ENCODE measurements at regions of chr1 and their contacts with region 1.

Region 1: GRCh38 chr1:157992031-157992832 is 1.2 kb upstream of the KIRREL1 start:
- DNase-seq: peak; percentile 56 to 75 (median 64)
- H3K4me3 ChIP-seq: peak overlapping the region in 3 of 7 experiments; percentile 69 to 81 (median 73)
- H3K27ac ChIP-seq: no peak overlapping the region
- H3K4me1 ChIP-seq: peaks cover 0 to 20% (median 16%) of the 10 kb centered on the region in 4 experiments
- H3K27me3 ChIP-seq: peaks cover 0 to 12% (median 2%) of the 10 kb centered on the region in 5 experiments

Region 2: DNA sequence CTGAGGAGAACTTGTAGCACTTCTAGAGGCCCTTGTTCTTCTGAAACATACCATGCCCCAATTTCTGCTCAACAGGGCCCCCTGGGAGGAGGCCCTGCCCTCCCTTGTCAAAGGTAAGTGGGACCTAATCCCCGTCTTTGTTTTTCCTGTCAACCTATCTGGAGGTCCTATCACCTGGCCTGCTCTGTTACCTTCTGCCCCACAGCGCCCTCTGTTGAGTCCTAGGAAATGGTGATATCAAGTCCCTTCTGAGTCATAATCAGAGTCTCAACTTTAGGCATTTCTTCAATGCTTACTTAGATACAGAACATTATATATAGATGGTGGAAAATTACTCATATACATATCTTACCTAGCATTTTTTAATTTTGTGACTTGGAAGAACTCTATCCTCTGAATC is 366.1 kb before region 1 on chr1:
- CTCF ChIA-PET with region 1: no interaction called
- POLR2A ChIA-PET with region 1: no interaction called
- DNase-seq: peak; percentile 41 to 61 (median 56)
- H3K4me3 ChIP-seq: no peak overlapping the region
- H3K27ac ChIP-seq: no peak overlapping the region
- H3K4me1 ChIP-seq: no peaks in the 10 kb centered on the region
- H3K27me3 ChIP-seq: peaks cover 0 to 23% (median 18%) of the 10 kb centered on the region in 5 experiments

Region 3: DNA sequence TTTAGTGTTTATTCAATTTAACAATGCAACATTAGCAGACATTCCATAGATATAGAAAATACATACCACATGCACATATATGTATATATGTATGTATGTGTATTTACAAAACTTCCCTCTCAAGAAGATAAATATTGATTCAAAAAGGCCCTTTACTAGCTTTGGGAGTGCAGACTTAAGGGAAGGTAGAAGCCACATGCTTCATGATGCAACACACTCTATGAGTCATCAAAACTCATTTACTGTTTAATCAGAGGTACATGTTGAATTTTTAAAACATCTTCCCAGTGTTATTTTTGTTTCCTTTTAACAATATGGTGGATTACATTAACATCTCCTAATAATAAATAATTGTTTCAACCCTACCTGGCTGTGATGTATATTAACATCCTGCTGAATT is 60.2 kb before region 1 on chr1:
- CTCF ChIA-PET with region 1: no interaction called
- POLR2A ChIA-PET with region 1: no interaction called
- DNase-seq: peak; percentile 15 to 70 (median 46)
- H3K4me3 ChIP-seq: no peak overlapping the region
- H3K27ac ChIP-seq: no peak overlapping the region
- H3K4me1 ChIP-seq: peaks cover 0 to 4% (median 1%) of the 10 kb centered on the region in 4 experiments
- H3K27me3 ChIP-seq: no peaks in the 10 kb centered on the region

Region 4: DNA sequence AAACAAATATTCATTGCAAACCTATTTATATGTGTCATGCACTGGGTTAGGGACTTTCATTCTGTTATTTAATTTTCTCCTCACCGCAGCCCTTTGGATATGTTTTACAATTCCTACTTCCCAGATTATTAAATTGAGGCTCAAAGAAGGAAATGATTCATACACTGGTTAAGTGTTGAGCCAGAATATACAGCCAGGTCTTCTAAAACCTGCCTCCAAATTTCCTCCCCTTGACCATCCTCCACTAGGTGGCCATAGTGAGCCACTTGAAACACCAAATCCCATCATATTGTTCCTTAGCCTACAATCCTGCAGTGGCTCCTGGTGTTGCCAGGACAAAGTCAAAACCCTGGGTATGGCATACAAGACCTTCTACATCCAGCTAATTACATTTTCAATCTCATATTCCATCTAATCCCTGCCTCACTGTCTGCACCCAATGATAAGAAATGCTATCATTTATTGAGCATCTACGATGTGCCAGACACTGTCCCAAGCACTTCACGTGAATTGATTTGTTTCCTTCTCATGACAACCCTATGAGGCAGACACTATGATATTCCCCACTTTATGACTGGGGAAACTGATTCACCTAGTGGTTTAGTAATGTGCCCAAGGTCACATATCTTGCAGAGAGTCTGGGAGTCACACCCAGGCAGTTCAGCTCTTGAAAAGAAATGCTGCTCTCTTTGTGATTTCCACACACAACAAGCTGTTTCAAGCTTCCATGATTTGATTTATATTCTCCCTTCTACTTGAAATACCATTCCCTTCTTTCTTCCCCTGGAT is 22.3 kb before region 1 on chr1:
- CTCF ChIA-PET with region 1: interaction called, 123 read pairs
- POLR2A ChIA-PET with region 1: no interaction called
- DNase-seq: peak; percentile 45 to 58 (median 46)
- H3K4me3 ChIP-seq: no peak overlapping the region
- H3K27ac ChIP-seq: no peak overlapping the region
- H3K4me1 ChIP-seq: peaks cover 0 to 8% (median 3%) of the 10 kb centered on the region in 4 experiments
- H3K27me3 ChIP-seq: no peaks in the 10 kb centered on the region

Region 5: GRCh38 chr1:158035976-158036583 is 43.8 kb after region 1 on chr1:
- CTCF ChIA-PET with region 1: interaction called, 103 read pairs
- POLR2A ChIA-PET with region 1: no interaction called
- DNase-seq: peak; percentile 66 to 77 (median 66)
- H3K4me3 ChIP-seq: no peak overlapping the region
- H3K27ac ChIP-seq: no peak overlapping the region
- H3K4me1 ChIP-seq: peaks cover 0 to 8% (median 4%) of the 10 kb centered on the region in 4 experiments
- H3K27me3 ChIP-seq: no peaks in the 10 kb centered on the region

Region 6: DNA sequence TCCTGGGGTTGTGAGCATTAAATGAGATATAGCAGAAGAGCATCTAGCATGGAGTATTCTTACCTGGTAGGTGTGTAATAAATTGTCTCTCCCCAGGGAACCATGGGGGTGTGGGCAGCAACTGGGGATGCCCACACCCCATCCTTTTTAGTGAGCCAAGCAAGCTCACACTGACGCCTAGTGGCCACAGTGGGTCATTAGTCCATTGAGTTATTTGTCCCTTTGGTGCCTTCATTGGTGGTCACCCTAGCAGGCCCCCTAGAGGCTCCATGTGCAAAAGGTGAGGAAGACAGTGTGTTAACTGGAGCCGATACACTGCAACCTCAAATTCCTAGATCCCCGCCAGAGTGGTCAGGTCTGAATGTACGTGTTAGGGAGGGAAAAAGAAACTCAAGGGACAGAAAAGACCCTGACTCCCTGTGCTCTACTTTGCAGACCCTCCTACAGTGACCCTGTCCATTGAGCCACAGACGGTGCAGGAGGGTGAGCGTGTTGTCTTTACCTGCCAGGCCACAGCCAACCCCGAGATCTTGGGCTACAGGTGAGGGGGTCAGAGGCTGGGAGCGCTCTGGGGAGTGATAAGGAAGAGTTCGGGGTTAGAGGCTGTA is 95.2 kb after region 1 on chr1:
- CTCF ChIA-PET with region 1: interaction called, 84 read pairs
- POLR2A ChIA-PET with region 1: no interaction called
- DNase-seq: peak; percentile 87 to 93 (median 90)
- H3K4me3 ChIP-seq: no peak overlapping the region
- H3K27ac ChIP-seq: no peak overlapping the region
- H3K4me1 ChIP-seq: peaks cover 0 to 2% (median 0%) of the 10 kb centered on the region in 4 experiments
- H3K27me3 ChIP-seq: no peaks in the 10 kb centered on the region

Region 7: DNA sequence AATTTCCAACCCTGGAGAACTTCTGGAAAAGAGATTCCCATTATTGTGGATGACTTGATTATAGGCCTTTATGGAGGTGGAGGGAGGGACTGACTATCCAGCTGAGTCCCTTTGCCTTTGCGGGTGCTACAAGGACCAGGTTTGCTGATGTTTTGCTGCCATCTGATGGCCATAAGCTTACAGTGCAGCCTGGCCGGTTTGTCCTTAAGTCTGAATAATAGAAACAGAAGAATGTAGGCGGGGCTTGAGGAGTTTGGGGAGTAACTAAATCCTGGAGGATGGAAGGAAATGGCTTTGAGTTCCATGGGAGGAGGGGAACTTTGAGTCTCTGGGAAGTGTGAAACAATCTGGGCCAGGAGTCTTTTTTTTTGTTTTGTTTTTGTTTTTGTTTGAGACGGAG is 132.8 kb after region 1 on chr1:
- CTCF ChIA-PET with region 1: interaction called, 174 read pairs
- POLR2A ChIA-PET with region 1: no interaction called
- DNase-seq: peak; percentile 87 to 93 (median 90)
- H3K4me3 ChIP-seq: no peak overlapping the region
- H3K27ac ChIP-seq: no peak overlapping the region
- H3K4me1 ChIP-seq: peaks cover 0 to 6% (median 4%) of the 10 kb centered on the region in 4 experiments
- H3K27me3 ChIP-seq: peaks cover 0 to 11% (median 4%) of the 10 kb centered on the region in 5 experiments

Measured in common myeloid progenitor, CD34-positive (primary cell).